ENCODE measurements at regions of chr2 and their contacts with region 1.

Region 1: DNA sequence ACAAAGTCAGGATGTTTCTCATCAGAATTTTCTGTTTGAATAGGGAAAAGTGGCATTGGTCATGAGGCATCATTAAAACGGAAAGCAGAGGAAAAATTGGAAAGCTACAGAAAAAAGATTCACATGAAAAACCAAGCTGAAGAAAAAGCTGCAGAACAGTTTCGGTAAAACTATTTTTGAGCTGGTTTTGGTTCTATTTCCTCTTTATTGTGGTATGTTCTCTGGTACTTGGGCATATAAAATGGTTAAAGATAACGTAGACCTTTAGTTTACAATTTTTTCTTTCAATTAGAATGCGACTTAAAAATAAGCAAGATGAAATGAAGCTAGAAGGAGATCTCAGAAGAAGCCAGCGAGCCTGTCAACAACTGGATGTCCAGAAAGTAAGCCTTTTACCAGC is 7.6 kb downstream of the GPATCH11 start:
- DNase-seq: no peak
- ATAC-seq: no peak
- H3K4me3 ChIP-seq: no peak overlapping the region
- H3K27ac ChIP-seq: no peak overlapping the region
- H3K4me1 ChIP-seq: no peaks in the 10 kb centered on the region
- H3K27me3 ChIP-seq: no peaks in the 10 kb centered on the region
- CTCF ChIP-seq: no peak

Region 2: DNA sequence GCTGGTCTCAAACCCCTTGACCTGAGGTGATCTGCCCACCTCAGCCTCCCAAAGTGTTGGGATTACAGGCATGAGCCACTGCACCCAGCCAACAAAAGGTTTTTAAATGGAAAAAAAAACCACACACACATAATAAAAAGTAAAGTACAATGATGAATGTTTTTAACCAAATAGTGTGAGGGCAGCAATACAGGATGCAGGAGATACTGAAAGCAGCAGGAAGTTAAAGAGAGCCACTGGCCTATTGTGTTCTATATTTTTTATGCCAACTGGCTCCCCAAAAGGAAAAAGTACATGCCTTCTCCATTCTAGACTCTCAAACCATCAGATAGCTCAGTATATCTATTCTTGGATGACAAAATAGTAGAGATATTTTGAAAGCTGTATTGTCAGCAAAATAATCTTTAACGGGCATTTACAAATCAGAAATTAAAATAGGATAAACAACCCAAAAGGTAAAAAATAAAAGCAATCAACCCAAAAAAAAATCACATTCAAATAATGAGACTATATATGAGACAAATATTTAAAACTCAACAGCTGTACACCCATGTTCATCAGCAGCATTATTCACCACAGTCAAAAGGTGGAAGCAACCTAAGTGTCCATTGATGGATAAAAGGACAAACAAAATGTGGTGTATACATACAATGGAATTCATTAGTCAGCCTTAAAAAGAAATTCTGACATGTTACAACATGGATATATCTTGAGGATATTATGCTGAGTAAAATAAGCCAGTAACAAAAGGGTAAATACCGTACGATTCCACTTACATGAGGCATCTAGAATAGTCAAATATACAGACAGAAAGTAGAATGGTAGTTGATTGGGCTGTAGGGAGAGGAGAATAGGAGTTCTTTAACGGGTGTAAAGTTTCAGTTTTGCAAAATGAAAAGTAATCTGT is 18.7 kb after region 1 on chr2:
- CTCF ChIA-PET with region 1: no interaction called
- POLR2A ChIA-PET with region 1: interaction called, 10 read pairs
- in situ Hi-C with region 1: no loop called
- intact Hi-C with region 1: no loop called
- DNase-seq: no peak
- ATAC-seq: no peak
- H3K4me3 ChIP-seq: no peak overlapping the region
- H3K27ac ChIP-seq: no peak overlapping the region
- H3K4me1 ChIP-seq: no peaks in the 10 kb centered on the region
- H3K27me3 ChIP-seq: no peaks in the 10 kb centered on the region
- CTCF ChIP-seq: no peak

Region 3: GRCh38 chr2:38233231-38233983 is 1141.5 kb after region 1 on chr2:
- CTCF ChIA-PET with region 1: no interaction called
- POLR2A ChIA-PET with region 1: no interaction called
- in situ Hi-C with region 1: no loop called
- intact Hi-C with region 1: no loop called
- DNase-seq: no peak
- ATAC-seq: no peak
- H3K4me3 ChIP-seq: no peak overlapping the region
- H3K27ac ChIP-seq: no peak overlapping the region
- H3K4me1 ChIP-seq: no peaks in the 10 kb centered on the region
- H3K27me3 ChIP-seq: peaks cover 1% of the 10 kb centered on the region; the same call in 1 of the 2 replicates
- CTCF ChIP-seq: no peak